Dendritic cell treated with granulocyte-macrophage colony-stimulating factor and Interleukin-4, amounts not matched to agents 40 ng/mL and 50 ng/mL, for 4 days (primary cell): ENCODE measurements at regions of chr16 and their contacts with region 1.

Region 1: GRCh38 chr16:58515125-58515870 is at the start of gene SETD6:
- H3K4me3 Mint-ChIP-seq: peak within 1 kb of the TSS; percentile 88
- H3K27ac Mint-ChIP-seq: peak within 1 kb of the TSS; percentile 75
- H3K4me1 Mint-ChIP-seq: peaks cover 15% of the 10 kb centered on the region
- H3K27me3 Mint-ChIP-seq: no peaks in the 10 kb centered on the region

Region 2: DNA sequence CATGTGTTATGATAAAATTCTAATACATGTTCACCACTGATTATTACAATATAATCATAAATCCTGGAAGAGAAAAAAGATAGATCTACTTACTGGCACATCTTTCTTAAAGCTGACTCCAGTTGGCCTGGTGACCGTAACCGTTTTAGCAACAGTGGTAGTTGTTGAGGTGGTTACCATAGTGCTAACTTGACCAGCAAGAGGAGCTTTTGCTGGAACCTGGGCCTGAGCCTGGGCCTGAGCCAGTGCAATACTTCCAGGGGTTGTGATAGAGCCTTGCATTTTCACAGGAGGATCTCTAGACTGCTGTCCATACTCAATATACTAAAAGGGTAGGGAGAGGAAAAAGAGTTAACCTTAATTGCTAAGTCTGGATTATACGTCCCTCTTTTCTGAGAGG is 36.2 kb after region 1 on chr16:
- intact Hi-C with region 1: loop called (anchors 5 kb)
- H3K4me3 Mint-ChIP-seq: no peak overlapping the region
- H3K27ac Mint-ChIP-seq: no peak overlapping the region
- H3K4me1 Mint-ChIP-seq: no peaks in the 10 kb centered on the region
- H3K27me3 Mint-ChIP-seq: no peaks in the 10 kb centered on the region

Region 3: GRCh38 chr16:58629572-58630104 is 114.3 kb after region 1 on chr16 and contains the start of gene CNOT1:
- intact Hi-C with region 1: loop called (anchors 1 kb)
- H3K4me3 Mint-ChIP-seq: peak within 1 kb of the TSS; percentile 100
- H3K27ac Mint-ChIP-seq: peak within 1 kb of the TSS; percentile 99
- H3K4me1 Mint-ChIP-seq: peaks cover 24% of the 10 kb centered on the region
- H3K27me3 Mint-ChIP-seq: no peaks in the 10 kb centered on the region

Region 4: DNA sequence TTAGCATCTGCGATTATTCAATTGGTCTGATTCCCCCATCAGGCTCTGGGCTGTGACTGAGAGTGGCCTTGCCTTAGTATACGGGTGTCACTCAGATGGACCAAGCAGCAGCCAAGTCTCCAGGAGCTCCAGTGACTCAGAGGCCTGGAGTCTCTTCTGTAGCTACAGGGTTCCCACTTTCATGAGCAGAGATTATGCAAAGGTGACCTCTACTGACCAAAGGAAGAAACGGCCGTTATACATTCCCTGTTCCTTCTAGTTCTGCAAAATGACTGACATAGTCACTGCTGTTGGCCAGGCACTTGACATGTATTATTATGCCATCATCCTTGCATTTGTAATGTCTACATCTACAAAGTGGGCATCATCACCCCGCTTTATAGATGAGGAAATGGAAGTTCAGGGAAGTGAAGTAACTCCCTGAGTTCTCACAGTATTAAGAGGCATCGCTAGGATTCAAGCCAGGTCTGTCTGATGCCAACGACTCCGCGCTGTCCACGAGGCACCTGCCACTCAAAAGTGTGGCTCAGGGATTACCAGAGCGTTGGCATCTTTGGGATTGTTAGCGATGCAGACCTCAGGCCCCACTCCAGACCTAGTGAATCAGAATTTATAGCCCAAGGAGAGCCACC is 146.0 kb after region 1 on chr16:
- intact Hi-C with region 1: loop called (anchors 2 kb)
- H3K4me3 Mint-ChIP-seq: no peak overlapping the region
- H3K27ac Mint-ChIP-seq: no peak overlapping the region
- H3K4me1 Mint-ChIP-seq: peaks cover 10% of the 10 kb centered on the region
- H3K27me3 Mint-ChIP-seq: no peaks in the 10 kb centered on the region

Region 5: DNA sequence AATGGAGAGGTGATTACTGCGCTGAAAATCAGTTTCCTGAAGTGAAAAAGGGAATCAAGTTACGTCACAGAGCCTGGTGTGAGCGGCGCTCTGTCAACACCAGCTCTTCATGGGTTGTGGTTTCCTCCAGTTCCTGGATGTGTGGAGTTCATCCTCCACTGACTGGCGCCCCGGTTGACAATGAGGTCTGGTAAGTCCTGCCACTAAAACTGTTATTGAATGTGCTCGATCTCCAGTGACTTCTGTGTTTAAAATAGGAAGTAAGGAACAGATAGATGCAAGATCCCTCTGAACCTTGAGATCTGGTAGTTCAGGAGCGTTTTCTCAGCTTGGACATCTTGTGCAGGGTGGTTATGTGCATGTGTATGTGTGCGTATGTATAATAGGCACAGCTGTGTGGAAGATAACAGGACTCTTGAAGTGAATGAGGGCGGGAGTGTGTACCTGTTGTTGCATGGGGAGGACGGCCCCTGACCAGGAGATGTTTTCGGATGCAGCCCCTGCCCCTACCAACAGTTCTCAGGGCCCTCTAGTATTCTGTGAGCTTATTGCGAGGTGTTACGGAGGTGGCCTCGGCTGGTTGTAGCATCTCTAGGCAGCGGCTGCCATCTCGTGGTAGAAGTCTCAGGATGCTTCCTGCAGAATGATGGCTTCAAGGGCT is 240.8 kb after region 1 on chr16:
- intact Hi-C with region 1: loop called (anchors 5 kb)
- H3K4me3 Mint-ChIP-seq: peak overlapping the region; percentile 32
- H3K27ac Mint-ChIP-seq: peak overlapping the region; percentile 63
- H3K4me1 Mint-ChIP-seq: peaks cover 10% of the 10 kb centered on the region
- H3K27me3 Mint-ChIP-seq: peaks cover 8% of the 10 kb centered on the region